ENCODE measurements at regions of chr2 and their contacts with region 1.

Region 1: GRCh38 chr2:201860636-201861066 is 54.3 kb downstream of the CDK15 start:
- DNase-seq: peak; percentile 77
- H3K4me3 Mint-ChIP-seq: no peak overlapping the region
- H3K27ac Mint-ChIP-seq: no peak overlapping the region
- H3K4me1 Mint-ChIP-seq: peaks cover 5% of the 10 kb centered on the region
- H3K27me3 Mint-ChIP-seq: no peaks in the 10 kb centered on the region
- CTCF ChIP-seq: peak; percentile 71

Region 2: GRCh38 chr2:201761101-201761500 is 99.5 kb before region 1 on chr2:
- CTCF ChIA-PET with region 1: no interaction called
- POLR2A ChIA-PET with region 1: no interaction called
- intact Hi-C with region 1: no loop called
- DNase-seq: no peak
- H3K4me3 Mint-ChIP-seq: no peak overlapping the region
- H3K27ac Mint-ChIP-seq: no peak overlapping the region
- H3K4me1 Mint-ChIP-seq: no peaks in the 10 kb centered on the region
- H3K27me3 Mint-ChIP-seq: no peaks in the 10 kb centered on the region
- CTCF ChIP-seq: no peak

Region 3: GRCh38 chr2:201774546-201774945 is 86.1 kb before region 1 on chr2:
- CTCF ChIA-PET with region 1: no interaction called
- POLR2A ChIA-PET with region 1: no interaction called
- intact Hi-C with region 1: no loop called
- DNase-seq: no peak
- H3K4me3 Mint-ChIP-seq: no peak overlapping the region
- H3K27ac Mint-ChIP-seq: no peak overlapping the region
- H3K4me1 Mint-ChIP-seq: peaks cover 12% of the 10 kb centered on the region
- H3K27me3 Mint-ChIP-seq: no peaks in the 10 kb centered on the region
- CTCF ChIP-seq: no peak

Region 4: DNA sequence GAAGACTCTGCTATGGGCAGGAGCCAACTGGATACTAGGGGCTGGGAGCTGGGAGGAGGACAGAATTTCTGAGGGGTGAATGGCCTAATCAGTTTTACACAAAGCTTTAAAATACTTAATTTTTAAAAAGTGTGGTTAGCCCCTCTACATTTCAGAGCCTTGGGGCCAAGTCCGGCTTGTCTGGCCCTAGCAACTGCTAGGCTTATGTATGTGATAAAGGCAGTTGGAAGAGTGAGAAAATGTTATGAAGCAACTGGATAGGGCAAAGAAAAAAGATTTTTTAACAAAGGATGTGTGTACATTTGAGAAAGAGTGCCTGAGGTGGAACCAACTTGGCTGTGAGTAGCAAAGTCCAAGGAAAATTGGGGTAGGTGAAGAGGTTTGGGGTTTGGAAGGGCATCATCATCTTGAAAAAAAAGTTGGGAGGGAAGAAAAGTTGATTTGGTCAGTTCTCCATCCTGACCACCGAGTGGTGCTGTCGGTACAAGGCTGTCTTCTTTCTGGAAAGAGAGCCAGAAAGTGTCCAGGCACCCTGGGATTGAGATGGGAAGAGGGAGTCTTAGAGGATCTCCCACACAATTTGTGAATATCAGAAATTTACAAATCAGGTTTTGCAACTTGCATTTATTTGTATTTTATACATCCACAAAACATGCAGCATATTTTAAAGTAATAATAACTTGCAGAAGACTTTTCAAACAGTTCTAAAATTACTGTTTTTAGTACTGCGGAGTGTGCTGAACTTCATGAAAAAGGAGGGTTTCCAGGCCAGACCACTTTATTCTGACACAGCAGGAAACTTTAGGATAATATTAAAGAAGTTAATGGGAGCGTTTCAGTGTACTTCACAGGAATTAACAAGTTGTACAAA is 64.8 kb before region 1 on chr2:
- CTCF ChIA-PET with region 1: interaction called, 25 read pairs
- POLR2A ChIA-PET with region 1: no interaction called
- intact Hi-C with region 1: loop called (anchors 1 kb)
- DNase-seq: peak; percentile 57
- H3K4me3 Mint-ChIP-seq: no peak overlapping the region
- H3K27ac Mint-ChIP-seq: no peak overlapping the region
- H3K4me1 Mint-ChIP-seq: peaks cover 12% of the 10 kb centered on the region
- H3K27me3 Mint-ChIP-seq: no peaks in the 10 kb centered on the region
- CTCF ChIP-seq: peak; percentile 74

Region 5: DNA sequence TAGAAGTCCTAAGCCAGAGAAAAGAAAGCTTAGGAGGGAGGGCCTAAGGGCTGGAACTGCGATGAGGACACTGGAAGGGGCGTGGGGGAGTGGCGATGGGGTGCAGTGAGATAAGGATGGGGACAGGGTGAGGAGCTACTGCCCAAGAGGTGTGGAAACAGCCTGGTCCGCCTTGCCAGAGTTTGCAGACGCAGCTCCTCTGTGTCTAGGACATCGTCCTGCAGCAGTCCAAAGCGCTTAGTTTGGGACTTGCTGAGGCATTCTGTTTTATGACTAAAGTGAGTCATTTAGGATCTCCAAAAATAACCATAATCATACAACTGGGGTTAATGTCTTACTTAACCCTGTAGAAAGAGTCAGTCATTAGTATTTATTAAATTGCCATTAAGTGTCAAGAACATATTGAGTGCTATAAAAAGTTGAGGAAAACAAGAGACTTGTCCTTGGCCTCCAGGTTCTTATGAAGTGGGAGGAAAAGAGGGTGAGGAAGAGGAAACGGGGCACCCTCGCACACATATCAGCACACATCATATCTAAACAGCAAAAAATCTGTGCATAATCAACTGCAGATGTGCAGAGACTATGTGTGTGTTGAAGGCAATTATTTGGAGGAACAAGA is 20.5 kb after region 1 on chr2:
- CTCF ChIA-PET with region 1: interaction called, 20 read pairs
- POLR2A ChIA-PET with region 1: no interaction called
- intact Hi-C with region 1: no loop called
- DNase-seq: no peak
- H3K4me3 Mint-ChIP-seq: no peak overlapping the region
- H3K27ac Mint-ChIP-seq: no peak overlapping the region
- H3K4me1 Mint-ChIP-seq: peaks cover 18% of the 10 kb centered on the region
- H3K27me3 Mint-ChIP-seq: peaks cover 32% of the 10 kb centered on the region
- CTCF ChIP-seq: no peak

Region 6: GRCh38 chr2:202033321-202034248 is 172.9 kb after region 1 on chr2 and contains the start of gene FZD7:
- CTCF ChIA-PET with region 1: interaction called, 3 read pairs
- POLR2A ChIA-PET with region 1: no interaction called
- intact Hi-C with region 1: loop called (anchors 1 kb)
- DNase-seq: peak; percentile 93
- H3K4me3 Mint-ChIP-seq: no peak within 1 kb of the TSS
- H3K27ac Mint-ChIP-seq: peak within 1 kb of the TSS; percentile 72
- H3K4me1 Mint-ChIP-seq: peaks cover 7% of the 10 kb centered on the region
- H3K27me3 Mint-ChIP-seq: no peaks in the 10 kb centered on the region
- CTCF ChIP-seq: no peak
- total RNA-seq, gene FZD7: 1.1 and 1.8 TPM in 2 replicates

Region 7: GRCh38 chr2:202158796-202159195 is 298.1 kb after region 1 on chr2:
- CTCF ChIA-PET with region 1: interaction called, 21 read pairs
- POLR2A ChIA-PET with region 1: interaction called, 4 read pairs
- intact Hi-C with region 1: loop called (anchors 2 kb)
- DNase-seq: peak; percentile 26
- H3K4me3 Mint-ChIP-seq: no peak overlapping the region
- H3K27ac Mint-ChIP-seq: no peak overlapping the region
- H3K4me1 Mint-ChIP-seq: no peaks in the 10 kb centered on the region
- H3K27me3 Mint-ChIP-seq: peaks cover 10% of the 10 kb centered on the region
- CTCF ChIP-seq: no peak

Region 8: GRCh38 chr2:202178342-202178958 is 317.8 kb after region 1 on chr2:
- CTCF ChIA-PET with region 1: interaction called, 208 read pairs
- POLR2A ChIA-PET with region 1: interaction called, 12 read pairs
- intact Hi-C with region 1: loop called (anchors 1 kb)
- DNase-seq: peak; percentile 71
- H3K4me3 Mint-ChIP-seq: no peak overlapping the region
- H3K27ac Mint-ChIP-seq: no peak overlapping the region
- H3K4me1 Mint-ChIP-seq: no peaks in the 10 kb centered on the region
- H3K27me3 Mint-ChIP-seq: no peaks in the 10 kb centered on the region
- CTCF ChIP-seq: peak; percentile 74